PC-9 (cell line): ENCODE measurements at regions of chr15 and their contacts with region 1.

Region 1: GRCh38 chr15:32663671-32664070 is 22.2 kb downstream of the SCG5 start:
- DNase-seq: no peak
- H3K4me3 ChIP-seq: no peak overlapping the region
- H3K27ac ChIP-seq: no peak overlapping the region
- H3K4me1 ChIP-seq: peaks cover 12% of the 10 kb centered on the region
- H3K27me3 ChIP-seq: no peaks in the 10 kb centered on the region
- CTCF ChIP-seq: no peak

Region 2: GRCh38 chr15:32824777-32825176 is 161.1 kb after region 1 on chr15:
- CTCF ChIA-PET with region 1: interaction called, 5 read pairs
- POLR2A ChIA-PET with region 1: no interaction called
- intact Hi-C with region 1: loop called (anchors 2 kb)
- DNase-seq: peak; percentile 25 to 88
- H3K4me3 ChIP-seq: no peak overlapping the region
- H3K27ac ChIP-seq: peak overlapping the region; percentile 74
- H3K4me1 ChIP-seq: peaks cover 23% of the 10 kb centered on the region
- H3K27me3 ChIP-seq: no peaks in the 10 kb centered on the region
- CTCF ChIP-seq: no peak